Dendritic cell treated with granulocyte-macrophage colony-stimulating factor and Interleukin-4, amounts not matched to agents 40 ng/mL and 50 ng/mL, for 4 days (primary cell): ENCODE measurements at regions of chr19 and their contacts with region 1.

Region 1: GRCh38 chr19:53467485-53468262 is at the start of gene ZNF813:
- H3K4me3 Mint-ChIP-seq: peak within 1 kb of the TSS; percentile 89
- H3K27ac Mint-ChIP-seq: peak within 1 kb of the TSS; percentile 91
- H3K4me1 Mint-ChIP-seq: peaks cover 29% of the 10 kb centered on the region
- H3K27me3 Mint-ChIP-seq: peaks cover 35% of the 10 kb centered on the region

Region 2: DNA sequence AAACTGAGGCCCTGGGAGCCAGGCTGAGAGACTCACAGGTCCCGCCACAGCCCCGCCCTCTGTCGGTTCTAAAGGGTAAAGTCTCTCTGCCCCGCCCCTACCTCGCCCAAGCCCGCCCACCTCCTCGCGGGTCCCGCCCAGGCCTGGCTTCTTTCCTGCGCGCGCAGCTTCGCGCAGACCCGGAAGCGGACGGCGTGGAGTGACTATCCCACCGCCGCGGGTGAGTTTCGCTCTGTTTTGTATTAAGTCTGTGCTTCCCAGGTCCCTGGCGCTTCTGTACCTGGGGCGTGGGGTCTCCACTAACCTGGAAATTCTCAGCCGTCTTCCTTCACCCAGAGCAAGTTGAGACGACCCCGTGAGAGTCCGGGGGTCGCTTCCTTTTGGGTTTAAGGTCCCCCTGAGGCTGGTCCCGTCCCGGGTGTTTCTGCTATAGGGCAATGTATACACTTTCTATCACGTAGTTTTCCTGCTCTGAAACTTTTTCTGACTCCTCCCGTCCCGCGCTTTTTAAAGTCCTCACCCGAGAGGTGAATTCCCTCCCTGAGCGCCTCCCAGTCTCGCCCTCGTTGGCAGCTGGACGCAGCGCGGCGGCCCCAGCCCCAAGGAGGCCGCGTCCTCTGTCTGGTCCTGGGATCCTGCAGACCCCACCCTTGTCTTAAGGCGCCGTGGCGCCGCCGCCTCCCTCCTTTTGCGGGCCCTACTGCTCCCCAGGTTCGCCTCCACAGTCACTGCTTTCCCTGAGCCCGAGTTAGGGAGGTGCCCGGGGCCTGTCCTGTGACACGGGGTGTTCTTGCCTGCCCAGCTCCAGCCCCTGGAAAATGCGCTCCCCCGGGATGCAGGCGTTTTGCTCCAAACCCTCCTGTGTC is 72.5 kb before region 1 on chr19 and contains the start of gene ZNF765:
- intact Hi-C with region 1: loop called (anchors 5 kb)
- H3K4me3 Mint-ChIP-seq: peak within 1 kb of the TSS; percentile 91
- H3K27ac Mint-ChIP-seq: peak within 1 kb of the TSS; percentile 86
- H3K4me1 Mint-ChIP-seq: peaks cover 21% of the 10 kb centered on the region
- H3K27me3 Mint-ChIP-seq: no peaks in the 10 kb centered on the region

Region 3: DNA sequence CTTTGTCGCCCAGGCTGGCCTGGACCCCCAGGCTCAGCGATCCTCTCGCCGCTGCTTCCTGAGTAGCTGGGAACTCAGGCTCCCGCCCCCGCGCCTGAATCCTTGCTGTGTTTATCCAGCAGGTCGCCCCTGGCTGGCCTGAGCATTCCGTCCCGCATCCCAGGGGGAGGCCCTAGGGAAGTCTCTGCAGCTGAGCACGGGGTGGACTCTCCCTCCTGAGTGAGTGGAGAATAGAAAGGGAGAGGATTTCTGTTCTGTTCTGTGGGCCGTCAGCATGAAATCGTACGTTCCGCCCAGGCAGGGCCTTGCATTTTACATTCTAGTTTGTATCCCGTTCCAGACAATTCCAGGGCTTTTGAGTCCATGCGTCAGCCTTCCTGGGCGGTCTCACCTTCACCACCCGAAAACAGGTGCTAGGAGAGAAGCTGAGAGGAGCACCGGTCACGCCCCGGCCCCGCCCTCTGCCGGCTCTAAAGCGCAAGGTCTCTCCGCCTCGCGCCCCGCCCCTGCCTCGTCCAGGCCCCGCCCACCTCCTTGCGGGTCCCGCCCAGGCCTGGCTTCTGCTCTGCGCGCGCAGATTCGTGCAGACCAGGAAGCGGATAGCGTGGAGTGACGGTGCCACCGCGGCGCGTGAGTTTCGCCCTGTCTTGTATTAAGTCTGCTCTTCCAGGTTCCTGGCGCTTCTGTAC is 36.1 kb before region 1 on chr19 and contains the start of gene ZNF761:
- intact Hi-C with region 1: loop called (anchors 5 kb)
- H3K4me3 Mint-ChIP-seq: peak within 1 kb of the TSS; percentile 90
- H3K27ac Mint-ChIP-seq: peak within 1 kb of the TSS; percentile 96
- H3K4me1 Mint-ChIP-seq: peaks cover 16% of the 10 kb centered on the region
- H3K27me3 Mint-ChIP-seq: peaks cover 5% of the 10 kb centered on the region

Region 4: GRCh38 chr19:53455828-53456227 is 11.8 kb before region 1 on chr19:
- intact Hi-C with region 1: no loop called
- H3K4me3 Mint-ChIP-seq: no peak overlapping the region
- H3K27ac Mint-ChIP-seq: no peak overlapping the region
- H3K4me1 Mint-ChIP-seq: no peaks in the 10 kb centered on the region
- H3K27me3 Mint-ChIP-seq: no peaks in the 10 kb centered on the region

Region 5: GRCh38 chr19:53520550-53521372 is 53.1 kb after region 1 on chr19:
- intact Hi-C with region 1: loop called (anchors 2 kb)
- H3K4me3 Mint-ChIP-seq: peak overlapping the region; percentile 84
- H3K27ac Mint-ChIP-seq: peak overlapping the region; percentile 86
- H3K4me1 Mint-ChIP-seq: peaks cover 12% of the 10 kb centered on the region
- H3K27me3 Mint-ChIP-seq: no peaks in the 10 kb centered on the region

Region 6: GRCh38 chr19:53545271-53546067 is 77.8 kb after region 1 on chr19:
- intact Hi-C with region 1: no loop called
- H3K4me3 Mint-ChIP-seq: no peak overlapping the region
- H3K27ac Mint-ChIP-seq: peak overlapping the region; percentile 30
- H3K4me1 Mint-ChIP-seq: peaks cover 34% of the 10 kb centered on the region
- H3K27me3 Mint-ChIP-seq: no peaks in the 10 kb centered on the region